Cardiac septum (tissue), 1 donor: ENCODE measurements at regions of chr1 and their contacts with region 1.

Region 1: DNA sequence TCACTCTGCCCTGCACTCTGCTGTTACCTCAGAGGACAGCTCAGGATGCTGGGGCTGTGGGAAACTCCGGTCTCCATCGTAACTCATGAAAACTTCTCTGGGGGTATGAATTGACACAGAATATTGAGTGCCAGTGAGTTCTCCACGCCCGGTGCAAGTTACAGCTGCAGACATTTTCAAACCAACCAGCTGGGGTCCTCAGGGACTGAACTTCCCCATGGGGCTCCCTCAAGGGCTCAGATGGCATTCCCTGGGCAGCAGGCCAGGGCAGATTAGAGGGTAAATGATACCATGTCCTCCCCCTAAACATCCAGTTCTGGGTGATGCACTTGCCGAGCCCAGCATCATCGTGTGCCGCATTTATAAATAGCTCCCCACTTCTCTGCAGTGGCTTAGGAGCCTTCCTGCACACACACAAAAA is 27.8 kb upstream of the CCSAP start:
- DNase-seq: peak; percentile 86

Region 2: DNA sequence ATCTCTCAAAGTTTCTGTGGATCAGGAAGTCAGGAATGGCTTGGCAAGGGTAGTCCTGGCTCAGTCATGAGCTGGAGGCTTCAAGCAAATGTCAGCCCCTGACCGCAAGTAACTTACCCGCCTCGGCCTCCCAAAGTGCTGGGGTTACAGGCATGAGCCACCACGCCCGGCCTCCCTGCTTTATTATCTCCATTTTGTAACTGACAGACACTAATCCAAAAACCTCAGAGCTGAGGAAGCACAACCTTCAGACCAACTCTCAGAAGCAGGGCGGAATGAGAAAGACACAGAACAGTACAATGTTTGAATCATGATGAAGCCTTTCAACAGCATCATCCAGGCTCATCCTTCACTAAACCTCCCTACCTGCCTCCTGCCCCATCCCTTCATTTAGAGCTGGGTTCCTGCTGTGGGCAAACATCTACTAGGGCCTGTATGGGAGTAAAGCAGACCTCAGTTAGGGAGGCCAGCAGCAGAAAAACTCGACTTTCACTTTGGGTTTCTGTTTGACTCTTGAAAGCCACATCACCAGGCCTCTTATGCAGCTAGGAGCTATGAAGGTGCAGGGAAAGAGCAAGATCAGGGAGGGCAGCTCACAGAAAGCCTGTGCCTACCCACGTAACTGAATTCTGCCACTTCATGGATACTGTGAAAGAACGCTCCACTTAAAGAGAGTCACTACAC is 184.1 kb before region 1 on chr1:
- intact Hi-C with region 1: no loop called
- DNase-seq: no peak

Region 3: GRCh38 chr1:229430761-229431283 is 60.2 kb after region 1 on chr1:
- intact Hi-C with region 1: loop called (anchors 2 kb)
- DNase-seq: no peak